ENCODE measurements at regions of chr6 and their contacts with region 1.

Region 1: DNA sequence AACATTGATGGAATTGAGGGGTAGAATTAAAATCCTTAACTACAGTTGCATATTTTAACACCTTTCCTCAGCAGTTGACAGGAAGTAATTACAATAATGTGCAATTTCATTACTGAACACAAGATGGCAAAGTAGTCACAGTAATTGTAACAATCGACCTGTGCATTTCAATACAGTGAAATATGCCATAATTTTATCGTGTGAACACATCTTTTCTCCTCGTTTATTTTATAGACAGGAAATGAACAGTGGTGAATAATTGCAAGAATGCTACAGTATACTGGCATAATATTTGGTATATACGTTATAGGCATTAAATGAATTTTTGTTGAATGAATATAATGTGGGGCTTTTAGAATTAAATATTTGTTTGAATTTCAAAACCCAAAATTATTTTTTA is 25.0 kb downstream of the CYB5R4 start:
- DNase-seq: peak; percentile 27
- ATAC-seq: peak; percentile 55; the same call in 2 of the 3 replicates
- H3K4me3 ChIP-seq: no peak overlapping the region
- H3K27ac ChIP-seq: no peak overlapping the region
- H3K4me1 ChIP-seq: peaks cover 4% of the 10 kb centered on the region
- H3K27me3 ChIP-seq: no peaks in the 10 kb centered on the region
- CTCF ChIP-seq: peak; percentile 82
- EP300 ChIP-seq: no peak
- POLR2A ChIP-seq: no peak
- RAD21 ChIP-seq: peak; percentile 64

Region 2: GRCh38 chr6:84052204-84052882 is 167.8 kb after region 1 on chr6:
- CTCF ChIA-PET with region 1: no interaction called
- POLR2A ChIA-PET with region 1: no interaction called
- in situ Hi-C with region 1: no loop called
- intact Hi-C with region 1: loop called (anchors 10 kb)
- DNase-seq: peak; percentile 35
- ATAC-seq: peak; percentile 99
- H3K4me3 ChIP-seq: peak overlapping the region in 1 of 3 experiments; percentile 44; a peak in 2 of 6 replicates
- H3K27ac ChIP-seq: no peak overlapping the region
- H3K4me1 ChIP-seq: peaks cover 15% of the 10 kb centered on the region; the same call in 1 of the 2 replicates
- H3K27me3 ChIP-seq: no peaks in the 10 kb centered on the region; a peak in 3 of 5 replicates
- CTCF ChIP-seq: 0 out of 2 replicates have a peak, but pooled peaks have one; percentile 10
- EP300 ChIP-seq: no peak
- POLR2A ChIP-seq: no peak
- RAD21 ChIP-seq: no peak

Region 3: GRCh38 chr6:84220809-84221409 is 336.4 kb after region 1 on chr6:
- CTCF ChIA-PET with region 1: interaction called, 30 read pairs
- POLR2A ChIA-PET with region 1: no interaction called
- in situ Hi-C with region 1: loop called (anchors 5 kb)
- intact Hi-C with region 1: loop called (anchors 1 kb)
- DNase-seq: no peak
- ATAC-seq: no peak
- H3K4me3 ChIP-seq: no peak overlapping the region
- H3K27ac ChIP-seq: no peak overlapping the region
- H3K4me1 ChIP-seq: peaks cover 3% of the 10 kb centered on the region
- H3K27me3 ChIP-seq: no peaks in the 10 kb centered on the region
- CTCF ChIP-seq: peak; percentile 41
- EP300 ChIP-seq: no peak
- POLR2A ChIP-seq: no peak
- RAD21 ChIP-seq: no peak

Region 4: DNA sequence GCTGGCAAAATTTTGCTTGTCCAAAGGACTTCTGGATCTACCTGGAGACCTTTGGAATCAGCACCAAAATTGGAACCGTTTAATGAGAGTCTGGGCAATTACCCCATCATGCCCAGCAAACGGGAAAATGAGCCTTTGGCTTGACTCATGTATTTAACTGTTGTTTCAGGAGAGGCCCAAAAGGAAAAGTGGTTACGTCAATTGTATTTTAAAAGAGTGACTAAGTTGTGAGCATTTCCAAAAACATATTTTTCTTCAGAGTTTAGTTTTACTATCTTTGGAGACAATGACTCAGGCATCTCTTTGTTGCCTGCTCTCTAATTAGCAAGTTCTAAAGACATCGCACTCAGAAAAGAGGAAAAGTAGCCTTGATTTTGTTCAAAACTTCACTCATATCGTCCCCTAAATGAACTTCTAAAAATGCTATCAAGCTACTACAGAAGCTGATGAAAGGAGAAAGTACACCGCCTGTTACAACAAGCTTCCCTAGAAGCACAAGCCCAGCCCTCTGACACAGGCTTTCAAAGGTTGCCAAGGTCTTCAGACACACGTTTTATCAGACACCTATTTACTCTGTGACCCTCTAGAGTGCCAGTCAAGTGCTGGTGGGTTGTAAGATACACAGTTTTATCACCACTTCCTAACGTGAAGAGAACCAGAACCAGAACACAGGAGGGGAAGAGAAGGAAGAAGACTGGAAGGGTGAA is 733.7 kb after region 1 on chr6:
- CTCF ChIA-PET with region 1: no interaction called
- POLR2A ChIA-PET with region 1: no interaction called
- in situ Hi-C with region 1: no loop called
- intact Hi-C with region 1: no loop called
- DNase-seq: no peak
- ATAC-seq: no peak
- H3K4me3 ChIP-seq: no peak overlapping the region
- H3K27ac ChIP-seq: no peak overlapping the region
- H3K4me1 ChIP-seq: no peaks in the 10 kb centered on the region
- H3K27me3 ChIP-seq: no peaks in the 10 kb centered on the region
- CTCF ChIP-seq: no peak
- EP300 ChIP-seq: no peak
- POLR2A ChIP-seq: no peak
- RAD21 ChIP-seq: no peak

Measured in HepG2 (cell line).